H1 (cell line): ENCODE measurements at regions of chr4 and their contacts with region 1.

Region 1: GRCh38 chr4:173257732-173258717 is 76.1 kb downstream of the HMGB2 start:
- DNase-seq: peak in 1 of 2 experiments; percentile 31
- H3K4me3 ChIP-seq: no peak overlapping the region
- H3K27ac ChIP-seq: no peak overlapping the region
- H3K4me1 ChIP-seq: peaks cover 0 to 6% (median 4%) of the 10 kb centered on the region in 4 experiments; a peak in 2 of 7 replicates
- H3K27me3 ChIP-seq: no peaks in the 10 kb centered on the region
- CTCF ChIP-seq: peak; percentile 79 to 89 (median 79)
- EP300 ChIP-seq: no peak
- POLR2A ChIP-seq: no peak
- RAD21 ChIP-seq: peak; percentile 97 to 99

Region 2: GRCh38 chr4:172953896-172954568 is 304.0 kb before region 1 on chr4:
- CTCF ChIA-PET with region 1: no interaction called
- POLR2A ChIA-PET with region 1: no interaction called
- DNase-seq: no peak
- H3K4me3 ChIP-seq: no peak overlapping the region
- H3K27ac ChIP-seq: no peak overlapping the region
- H3K4me1 ChIP-seq: no peaks in the 10 kb centered on the region; a peak in 1 of 7 replicates
- H3K27me3 ChIP-seq: no peaks in the 10 kb centered on the region
- CTCF ChIP-seq: no peak
- EP300 ChIP-seq: no peak
- POLR2A ChIP-seq: no peak
- RAD21 ChIP-seq: no peak

Region 3: GRCh38 chr4:173025131-173025530 is 232.9 kb before region 1 on chr4:
- CTCF ChIA-PET with region 1: interaction called, 108 read pairs
- POLR2A ChIA-PET with region 1: no interaction called
- DNase-seq: peak; percentile 27 to 60
- H3K4me3 ChIP-seq: no peak overlapping the region
- H3K27ac ChIP-seq: no peak overlapping the region
- H3K4me1 ChIP-seq: peaks cover 2 to 8% (median 4%) of the 10 kb centered on the region in 4 experiments; a peak in 4 of 7 replicates
- H3K27me3 ChIP-seq: no peaks in the 10 kb centered on the region
- CTCF ChIP-seq: peak in 2 of 3 experiments; percentile 68 to 81; a peak in 3 of 4 replicates
- EP300 ChIP-seq: no peak
- POLR2A ChIP-seq: no peak
- RAD21 ChIP-seq: peak; percentile 94

Region 4: GRCh38 chr4:173039617-173040577 is 218.1 kb before region 1 on chr4:
- CTCF ChIA-PET with region 1: interaction called, 12 read pairs
- POLR2A ChIA-PET with region 1: no interaction called
- DNase-seq: no peak
- H3K4me3 ChIP-seq: no peak overlapping the region
- H3K27ac ChIP-seq: no peak overlapping the region
- H3K4me1 ChIP-seq: peaks cover 1 to 15% (median 5%) of the 10 kb centered on the region in 4 experiments; a peak in 5 of 7 replicates
- H3K27me3 ChIP-seq: peaks cover 0 to 1% (median 0%) of the 10 kb centered on the region in 4 experiments; a peak in 1 of 7 replicates
- CTCF ChIP-seq: no peak
- EP300 ChIP-seq: no peak
- POLR2A ChIP-seq: no peak
- RAD21 ChIP-seq: no peak

Region 5: GRCh38 chr4:173168396-173169177 is 89.4 kb before region 1 on chr4 and contains the start of gene GALNT7:
- CTCF ChIA-PET with region 1: interaction called, 12 read pairs
- POLR2A ChIA-PET with region 1: interaction called, 4 read pairs
- DNase-seq: peak; percentile 54 to 83
- H3K4me3 ChIP-seq: peak within 1 kb of the TSS; percentile 82 to 93 (median 86)
- H3K27ac ChIP-seq: peak within 1 kb of the TSS; percentile 86; the same call in 1 of the 2 replicates
- H3K4me1 ChIP-seq: peaks cover 8 to 27% (median 19%) of the 10 kb centered on the region in 4 experiments
- H3K27me3 ChIP-seq: no peaks in the 10 kb centered on the region
- CTCF ChIP-seq: no peak
- EP300 ChIP-seq: peak in 1 of 2 experiments; percentile 34; a peak in 1 of 3 replicates
- POLR2A ChIP-seq: peak; percentile 58 to 78
- RAD21 ChIP-seq: no peak
- total RNA-seq, gene GALNT7: 78.9 and 85.5 TPM in 2 replicates

Region 6: GRCh38 chr4:173246719-173247118 is 11.3 kb before region 1 on chr4:
- CTCF ChIA-PET with region 1: interaction called, 13 read pairs
- POLR2A ChIA-PET with region 1: interaction called, 3 read pairs
- DNase-seq: no peak
- H3K4me3 ChIP-seq: peak overlapping the region in 1 of 4 experiments; percentile 13; a peak in 1 of 8 replicates
- H3K27ac ChIP-seq: no peak overlapping the region
- H3K4me1 ChIP-seq: peaks cover 1 to 30% (median 17%) of the 10 kb centered on the region in 4 experiments
- H3K27me3 ChIP-seq: no peaks in the 10 kb centered on the region; a peak in 1 of 7 replicates
- CTCF ChIP-seq: no peak
- EP300 ChIP-seq: no peak
- POLR2A ChIP-seq: 0 out of 3 replicates have a peak, but pooled peaks of 1 of the 2 experiments have one; percentile 26
- RAD21 ChIP-seq: no peak

Region 7: DNA sequence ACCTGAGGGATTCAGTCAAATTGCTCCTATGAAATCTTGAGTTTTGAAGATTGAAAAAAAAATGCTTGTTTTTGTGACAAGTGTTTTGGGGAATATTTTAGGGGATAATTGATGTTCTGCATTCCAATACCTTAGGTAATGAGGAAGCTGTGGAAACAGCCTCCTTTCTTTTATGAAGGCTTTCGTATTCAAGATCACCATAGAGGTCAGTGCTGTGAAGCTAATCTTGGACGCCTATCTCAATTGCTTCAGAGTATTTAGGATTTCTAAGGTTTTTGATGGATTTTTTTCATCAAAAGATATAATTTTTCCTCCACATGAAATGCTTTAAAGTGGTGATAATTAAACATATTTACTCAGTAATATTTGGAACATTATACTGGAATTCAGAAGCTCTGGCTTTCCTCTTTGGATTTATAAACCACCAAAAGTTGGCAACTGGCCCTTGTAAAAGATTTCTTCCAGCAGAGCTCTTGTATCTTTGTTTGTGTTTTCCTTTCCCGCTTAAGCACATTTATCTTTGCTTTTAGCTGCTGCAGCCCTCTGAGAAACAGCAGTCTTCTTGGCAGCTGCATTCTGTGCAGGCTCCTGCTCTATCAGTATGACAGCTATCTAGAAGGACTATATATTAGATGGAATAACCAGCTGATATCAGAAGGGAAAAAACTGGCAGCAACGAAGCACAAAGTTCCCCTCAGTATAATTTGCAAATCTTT is 12.4 kb after region 1 on chr4:
- CTCF ChIA-PET with region 1: interaction called, 10 read pairs
- POLR2A ChIA-PET with region 1: interaction called, 3 read pairs
- DNase-seq: no peak
- H3K4me3 ChIP-seq: no peak overlapping the region
- H3K27ac ChIP-seq: no peak overlapping the region
- H3K4me1 ChIP-seq: peaks cover 0 to 5% (median 1%) of the 10 kb centered on the region in 4 experiments; a peak in 3 of 7 replicates
- H3K27me3 ChIP-seq: no peaks in the 10 kb centered on the region; a peak in 1 of 7 replicates
- CTCF ChIP-seq: no peak
- EP300 ChIP-seq: no peak
- POLR2A ChIP-seq: no peak
- RAD21 ChIP-seq: no peak

Region 8: DNA sequence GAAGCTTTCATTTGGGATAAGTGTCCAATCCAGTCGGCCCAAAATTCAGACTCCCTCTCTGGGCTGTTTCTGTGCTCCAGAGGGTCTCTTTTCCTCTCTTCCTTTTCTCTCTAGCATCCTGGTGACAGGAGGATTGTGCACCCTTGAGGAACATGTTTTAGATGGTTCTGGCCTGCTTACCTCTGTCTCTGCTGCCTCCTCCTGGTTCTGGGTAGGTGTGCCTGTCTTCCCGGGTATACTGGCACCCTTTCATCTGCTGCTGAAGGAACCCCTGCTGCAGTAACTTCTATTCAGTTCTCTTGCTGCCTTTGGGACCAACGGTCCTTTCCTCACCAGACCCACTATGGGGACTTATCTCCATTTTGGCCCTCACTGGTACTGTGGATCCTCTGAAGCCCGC is 23.0 kb after region 1 on chr4:
- CTCF ChIA-PET with region 1: interaction called, 12 read pairs
- POLR2A ChIA-PET with region 1: no interaction called
- DNase-seq: no peak
- H3K4me3 ChIP-seq: no peak overlapping the region
- H3K27ac ChIP-seq: no peak overlapping the region
- H3K4me1 ChIP-seq: no peaks in the 10 kb centered on the region
- H3K27me3 ChIP-seq: no peaks in the 10 kb centered on the region
- CTCF ChIP-seq: peak; percentile 21 to 42 (median 36); a peak in 3 of 4 replicates
- EP300 ChIP-seq: no peak
- POLR2A ChIP-seq: no peak
- RAD21 ChIP-seq: peak; percentile 41 to 50

Region 9: DNA sequence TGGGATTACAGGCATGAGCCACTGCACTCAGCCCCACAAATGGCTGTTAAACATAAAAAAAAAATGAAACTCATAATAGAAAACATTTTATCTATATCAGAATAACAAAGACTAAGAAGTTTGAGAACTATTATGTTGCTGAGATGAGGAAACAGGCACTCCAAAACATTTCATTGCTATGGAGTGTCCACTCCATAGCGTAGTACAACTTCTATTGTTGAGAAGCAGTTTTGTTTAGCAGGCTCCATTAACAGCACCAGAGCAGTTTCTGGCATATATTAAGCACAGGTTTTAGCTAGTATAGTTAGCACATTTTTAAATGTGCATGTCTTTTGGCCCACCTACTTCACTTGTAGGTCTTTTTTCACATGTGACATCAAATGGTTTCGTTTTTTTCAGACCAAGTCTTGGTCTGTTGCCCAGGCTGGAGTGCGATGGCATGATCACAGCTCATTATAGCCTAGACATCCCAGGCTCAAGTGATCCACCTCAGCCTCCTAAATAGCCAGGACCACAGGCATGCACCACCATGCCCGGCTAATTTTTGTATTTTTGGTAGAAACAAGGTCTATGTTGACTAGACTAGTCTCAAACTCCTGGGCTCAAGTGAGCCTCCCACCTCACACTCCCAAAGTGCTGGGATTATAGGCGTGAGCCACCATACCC is 70.3 kb after region 1 on chr4:
- CTCF ChIA-PET with region 1: no interaction called
- POLR2A ChIA-PET with region 1: no interaction called
- DNase-seq: no peak
- H3K4me3 ChIP-seq: no peak overlapping the region
- H3K27ac ChIP-seq: no peak overlapping the region
- H3K4me1 ChIP-seq: peaks cover 0 to 3% (median 1%) of the 10 kb centered on the region in 4 experiments; a peak in 3 of 7 replicates
- H3K27me3 ChIP-seq: no peaks in the 10 kb centered on the region
- CTCF ChIP-seq: no peak
- EP300 ChIP-seq: no peak
- POLR2A ChIP-seq: no peak
- RAD21 ChIP-seq: no peak

Region 10: DNA sequence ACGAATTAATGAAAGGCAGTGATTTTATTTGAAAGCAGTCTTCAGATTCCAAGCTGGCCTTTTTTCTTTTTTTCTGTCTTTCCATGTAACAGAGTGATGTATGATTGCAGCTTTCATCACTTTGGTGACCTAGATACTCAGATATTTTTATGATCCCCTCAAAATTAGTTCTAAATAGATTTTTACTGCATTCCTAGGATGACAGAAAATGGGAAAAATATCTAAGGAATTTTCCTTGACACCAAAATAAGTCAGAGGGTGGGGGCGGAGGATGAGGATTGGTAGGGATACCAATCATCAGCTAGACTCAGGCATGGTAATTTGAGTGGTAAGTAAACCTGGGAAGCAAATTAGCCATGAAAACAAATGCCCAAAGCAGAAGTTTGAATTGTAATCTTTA is 88.0 kb after region 1 on chr4:
- CTCF ChIA-PET with region 1: no interaction called
- POLR2A ChIA-PET with region 1: no interaction called
- DNase-seq: no peak
- H3K4me3 ChIP-seq: no peak overlapping the region
- H3K27ac ChIP-seq: no peak overlapping the region
- H3K4me1 ChIP-seq: peaks cover 0 to 9% (median 3%) of the 10 kb centered on the region in 4 experiments; a peak in 3 of 7 replicates
- H3K27me3 ChIP-seq: no peaks in the 10 kb centered on the region
- CTCF ChIP-seq: no peak
- EP300 ChIP-seq: no peak
- POLR2A ChIP-seq: no peak
- RAD21 ChIP-seq: no peak